GM12878 (cell line): ENCODE measurements at regions of chr22 and their contacts with region 1.

Region 1: DNA sequence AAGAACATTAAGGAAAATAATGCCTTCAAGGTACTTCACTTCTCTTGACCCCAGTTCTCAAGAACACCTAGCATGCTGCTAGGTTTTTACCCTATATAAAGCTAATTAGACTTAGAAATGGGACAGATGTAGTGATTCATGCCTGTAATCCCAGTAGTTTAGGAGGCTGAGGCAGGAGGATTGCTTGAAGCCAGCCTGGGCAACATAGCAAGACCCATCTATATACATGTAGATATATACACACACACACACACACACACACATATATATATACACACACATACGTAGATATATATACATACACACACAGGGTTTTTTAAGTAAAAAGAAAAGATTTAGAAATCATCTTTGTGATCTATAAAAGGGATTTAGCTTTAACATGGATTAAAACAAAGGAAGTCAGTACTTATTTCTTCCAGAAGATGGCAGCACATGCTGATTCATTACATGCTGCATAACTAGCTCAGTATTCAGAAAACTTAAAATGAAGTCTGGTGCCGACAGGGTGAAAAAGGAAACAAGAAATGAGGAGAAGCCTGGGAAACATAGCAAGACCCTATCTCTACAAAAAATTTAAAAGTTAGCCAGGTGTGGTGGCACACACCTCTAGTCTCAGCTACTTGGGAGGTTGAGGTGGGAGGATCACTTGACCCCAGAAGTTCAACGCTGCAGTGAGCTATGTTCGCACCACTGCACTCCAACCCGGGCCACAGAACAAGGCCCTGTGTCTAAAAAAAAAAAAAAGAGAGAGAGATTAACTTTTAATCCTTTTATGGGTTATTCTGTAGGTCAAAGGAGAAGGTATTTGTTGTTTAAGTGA is 28.5 kb upstream of the RBX1 start:
- DNase-seq: peak; percentile 47
- ATAC-seq: peak; percentile 88
- H3K4me3 ChIP-seq: no peak overlapping the region
- H3K27ac ChIP-seq: no peak overlapping the region
- H3K4me1 ChIP-seq: no peaks in the 10 kb centered on the region
- H3K27me3 ChIP-seq: no peaks in the 10 kb centered on the region
- CTCF ChIP-seq: peak; percentile 41 to 67 (median 56); a peak in 5 of 6 replicates
- EP300 ChIP-seq: no peak
- POLR2A ChIP-seq: no peak
- RAD21 ChIP-seq: peak; percentile 84

Region 2: GRCh38 chr22:40746428-40747220 is 176.1 kb before region 1 on chr22:
- CTCF ChIA-PET with region 1: no interaction called
- POLR2A ChIA-PET with region 1: no interaction called
- RAD21 ChIA-PET with region 1: no interaction called
- SMC1A ChIA-PET with region 1: no interaction called
- in situ Hi-C with region 1: no loop called
- intact Hi-C with region 1: no loop called
- DNase-seq: no peak
- ATAC-seq: no peak
- H3K4me3 ChIP-seq: no peak overlapping the region
- H3K27ac ChIP-seq: no peak overlapping the region
- H3K4me1 ChIP-seq: no peaks in the 10 kb centered on the region
- H3K27me3 ChIP-seq: no peaks in the 10 kb centered on the region
- CTCF ChIP-seq: no peak
- EP300 ChIP-seq: no peak
- POLR2A ChIP-seq: no peak
- RAD21 ChIP-seq: no peak

Region 3: DNA sequence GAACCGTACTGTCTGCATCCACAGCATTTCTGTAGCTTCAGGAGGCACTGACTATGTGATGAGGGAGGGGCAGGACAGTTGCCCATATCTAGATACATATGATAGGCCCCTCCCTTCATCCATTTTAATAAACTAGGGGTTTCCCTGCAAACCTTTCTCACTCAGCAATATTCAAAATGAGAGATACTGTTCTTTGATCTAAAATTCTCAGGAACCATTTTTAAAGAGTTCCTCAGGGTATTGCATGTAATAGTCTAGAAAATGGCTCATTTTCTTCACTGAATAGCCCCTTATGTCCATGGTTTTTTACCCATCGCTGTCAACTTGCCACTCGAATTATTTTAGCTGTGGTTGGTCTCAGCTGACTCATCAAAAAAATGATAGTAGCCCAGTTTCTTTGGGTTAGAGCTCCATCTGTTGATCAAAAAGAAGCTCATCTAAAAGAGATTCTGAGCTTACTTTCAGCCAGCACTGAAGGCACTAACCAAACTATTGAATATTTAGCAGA is 23.8 kb before region 1 on chr22:
- CTCF ChIA-PET with region 1: interaction called, 15 read pairs
- POLR2A ChIA-PET with region 1: interaction called, 4 read pairs
- RAD21 ChIA-PET with region 1: interaction called, 11 read pairs
- SMC1A ChIA-PET with region 1: interaction called, 4 read pairs
- in situ Hi-C with region 1: no loop called
- intact Hi-C with region 1: no loop called
- DNase-seq: peak; percentile 44
- ATAC-seq: peak; percentile 92
- H3K4me3 ChIP-seq: no peak overlapping the region
- H3K27ac ChIP-seq: no peak overlapping the region
- H3K4me1 ChIP-seq: no peaks in the 10 kb centered on the region
- H3K27me3 ChIP-seq: no peaks in the 10 kb centered on the region
- CTCF ChIP-seq: peak; percentile 48 to 68 (median 54); a peak in 5 of 6 replicates
- EP300 ChIP-seq: no peak
- POLR2A ChIP-seq: no peak
- RAD21 ChIP-seq: peak; percentile 77

Region 4: DNA sequence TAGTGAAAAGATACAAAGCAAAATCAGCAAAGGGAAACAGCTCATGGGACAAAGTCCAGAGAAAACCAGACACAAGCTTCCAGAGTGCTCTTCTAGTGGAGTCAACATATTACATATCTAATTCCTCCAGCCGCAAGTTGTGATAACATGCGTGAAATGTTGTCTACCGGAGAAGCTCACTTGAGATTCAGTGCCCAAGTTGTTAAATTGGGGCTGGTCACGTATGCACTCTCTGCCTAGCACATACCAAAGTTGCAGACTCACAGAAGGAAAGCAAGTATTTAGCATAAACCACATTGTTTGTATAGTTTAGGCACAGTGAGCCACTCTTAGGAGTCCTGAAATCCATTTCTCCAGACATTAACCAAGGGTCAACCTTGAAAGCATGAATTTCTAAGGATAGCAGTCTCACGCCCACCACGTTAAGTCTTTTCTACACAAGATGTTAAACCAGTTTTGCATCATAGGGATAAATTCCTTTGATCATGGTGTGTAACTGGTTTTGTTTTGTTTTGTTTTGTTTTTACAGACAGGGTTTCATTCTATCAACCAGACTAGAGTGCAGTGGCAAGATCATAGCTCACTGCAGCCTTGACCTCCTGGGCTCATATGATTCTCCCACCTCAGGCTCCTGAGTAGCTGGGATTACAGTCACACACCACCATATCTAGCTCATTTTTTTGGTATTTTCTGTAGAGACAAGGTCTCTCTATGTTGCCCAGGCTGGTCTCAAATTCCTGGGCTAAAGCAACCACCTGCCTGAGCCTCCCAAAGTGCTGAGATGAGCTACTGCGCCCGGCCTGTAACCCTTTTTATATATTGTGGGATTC is 130.2 kb after region 1 on chr22:
- CTCF ChIA-PET with region 1: interaction called, 10 read pairs
- POLR2A ChIA-PET with region 1: no interaction called
- RAD21 ChIA-PET with region 1: interaction called, 4 read pairs
- SMC1A ChIA-PET with region 1: no interaction called
- in situ Hi-C with region 1: no loop called
- intact Hi-C with region 1: no loop called
- DNase-seq: no peak
- ATAC-seq: peak; percentile 40
- H3K4me3 ChIP-seq: no peak overlapping the region
- H3K27ac ChIP-seq: no peak overlapping the region
- H3K4me1 ChIP-seq: 0 out of 2 replicates have a peak, but pooled peaks cover 5% of the 10 kb centered on the region
- H3K27me3 ChIP-seq: no peaks in the 10 kb centered on the region
- CTCF ChIP-seq: no peak
- EP300 ChIP-seq: no peak
- POLR2A ChIP-seq: no peak
- RAD21 ChIP-seq: no peak

Region 5: GRCh38 chr22:41123151-41123550 is 200.5 kb after region 1 on chr22:
- CTCF ChIA-PET with region 1: interaction called, 9 read pairs
- POLR2A ChIA-PET with region 1: no interaction called
- RAD21 ChIA-PET with region 1: interaction called, 6 read pairs
- SMC1A ChIA-PET with region 1: interaction called, 16 read pairs
- in situ Hi-C with region 1: no loop called
- intact Hi-C with region 1: no loop called
- DNase-seq: no peak
- ATAC-seq: no peak
- H3K4me3 ChIP-seq: no peak overlapping the region
- H3K27ac ChIP-seq: no peak overlapping the region
- H3K4me1 ChIP-seq: no peaks in the 10 kb centered on the region
- H3K27me3 ChIP-seq: no peaks in the 10 kb centered on the region
- CTCF ChIP-seq: no peak
- EP300 ChIP-seq: no peak
- POLR2A ChIP-seq: no peak
- RAD21 ChIP-seq: no peak

Region 6: DNA sequence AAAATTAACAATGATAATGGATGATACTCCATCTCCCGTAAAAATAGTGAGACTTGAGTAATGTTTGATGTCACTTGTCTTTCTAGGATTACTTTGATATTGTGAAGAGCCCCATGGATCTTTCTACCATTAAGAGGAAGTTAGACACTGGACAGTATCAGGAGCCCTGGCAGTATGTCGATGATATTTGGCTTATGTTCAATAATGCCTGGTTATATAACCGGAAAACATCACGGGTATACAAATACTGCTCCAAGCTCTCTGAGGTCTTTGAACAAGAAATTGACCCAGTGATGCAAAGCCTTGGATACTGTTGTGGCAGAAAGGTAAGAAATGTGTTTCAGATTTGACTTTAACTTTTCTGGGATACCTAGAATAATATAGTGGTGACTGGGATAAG is 234.4 kb after region 1 on chr22:
- CTCF ChIA-PET with region 1: interaction called, 10 read pairs
- POLR2A ChIA-PET with region 1: no interaction called
- RAD21 ChIA-PET with region 1: interaction called, 6 read pairs
- SMC1A ChIA-PET with region 1: interaction called, 9 read pairs
- in situ Hi-C with region 1: no loop called
- intact Hi-C with region 1: no loop called
- DNase-seq: no peak
- ATAC-seq: no peak
- H3K4me3 ChIP-seq: no peak overlapping the region
- H3K27ac ChIP-seq: no peak overlapping the region
- H3K4me1 ChIP-seq: no peaks in the 10 kb centered on the region
- H3K27me3 ChIP-seq: no peaks in the 10 kb centered on the region
- CTCF ChIP-seq: no peak
- EP300 ChIP-seq: no peak
- POLR2A ChIP-seq: no peak
- RAD21 ChIP-seq: no peak

Region 7: DNA sequence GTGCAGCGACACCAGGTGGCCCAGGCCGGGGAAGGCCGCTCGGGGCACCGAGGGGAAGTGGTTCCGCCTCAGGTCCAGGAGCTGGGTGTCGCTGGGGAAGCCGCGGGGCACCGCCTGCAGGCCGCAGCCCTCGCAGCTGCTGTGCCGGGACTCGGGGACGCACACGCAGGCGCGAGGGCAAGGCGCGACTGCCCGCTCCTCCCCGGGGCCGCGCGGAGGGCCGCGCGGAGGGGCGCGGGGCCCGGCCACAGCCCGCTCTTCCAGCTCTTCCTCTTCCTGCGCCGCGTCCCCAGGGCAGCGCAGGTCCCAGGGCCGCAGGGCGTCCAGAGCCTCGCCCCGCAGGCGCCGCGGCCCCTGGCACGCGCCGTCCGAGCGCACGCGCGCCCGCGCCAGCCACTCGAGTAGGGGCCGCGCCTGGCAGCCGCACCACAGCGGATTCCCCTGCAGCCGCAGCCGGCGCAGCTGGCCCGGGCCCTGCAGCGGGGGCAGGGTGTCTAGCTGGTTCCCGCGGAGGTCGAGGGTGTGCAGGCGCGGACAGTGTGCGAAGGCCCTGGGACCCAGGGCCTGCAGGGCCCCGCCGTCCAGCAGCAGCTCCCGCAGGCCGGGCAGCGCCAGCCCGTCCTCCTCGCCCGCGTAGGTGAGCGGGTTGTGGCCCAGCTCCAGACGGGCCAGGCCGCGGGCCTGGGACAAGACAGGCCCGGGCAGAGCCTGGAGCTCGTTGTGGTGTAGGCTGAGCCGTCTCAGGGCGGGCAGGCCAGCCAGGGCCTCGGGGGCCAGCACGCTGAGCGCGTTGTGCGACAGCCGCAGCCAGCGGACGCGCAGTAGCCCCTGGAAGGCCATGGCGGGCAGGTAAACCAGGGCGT is 315.2 kb after region 1 on chr22:
- CTCF ChIA-PET with region 1: interaction called, 136 read pairs
- POLR2A ChIA-PET with region 1: interaction called, 5 read pairs
- RAD21 ChIA-PET with region 1: interaction called, 101 read pairs
- SMC1A ChIA-PET with region 1: interaction called, 73 read pairs
- in situ Hi-C with region 1: no loop called
- intact Hi-C with region 1: loop called (anchors 2 kb)
- DNase-seq: peak; percentile 21
- ATAC-seq: peak; percentile 95
- H3K4me3 ChIP-seq: peak overlapping the region; percentile 47; the same call in 1 of the 2 replicates
- H3K27ac ChIP-seq: no peak overlapping the region
- H3K4me1 ChIP-seq: peaks cover 3% of the 10 kb centered on the region; the same call in 1 of the 2 replicates
- H3K27me3 ChIP-seq: no peaks in the 10 kb centered on the region; a peak in 1 of 4 replicates
- CTCF ChIP-seq: peak; percentile 76 to 89 (median 78)
- EP300 ChIP-seq: no peak
- POLR2A ChIP-seq: peak; percentile 67; the same call in 1 of the 2 replicates
- RAD21 ChIP-seq: peak; percentile 71